HepG2 (cell line): ENCODE measurements at regions of chr3 and their contacts with region 1.

Region 1: DNA sequence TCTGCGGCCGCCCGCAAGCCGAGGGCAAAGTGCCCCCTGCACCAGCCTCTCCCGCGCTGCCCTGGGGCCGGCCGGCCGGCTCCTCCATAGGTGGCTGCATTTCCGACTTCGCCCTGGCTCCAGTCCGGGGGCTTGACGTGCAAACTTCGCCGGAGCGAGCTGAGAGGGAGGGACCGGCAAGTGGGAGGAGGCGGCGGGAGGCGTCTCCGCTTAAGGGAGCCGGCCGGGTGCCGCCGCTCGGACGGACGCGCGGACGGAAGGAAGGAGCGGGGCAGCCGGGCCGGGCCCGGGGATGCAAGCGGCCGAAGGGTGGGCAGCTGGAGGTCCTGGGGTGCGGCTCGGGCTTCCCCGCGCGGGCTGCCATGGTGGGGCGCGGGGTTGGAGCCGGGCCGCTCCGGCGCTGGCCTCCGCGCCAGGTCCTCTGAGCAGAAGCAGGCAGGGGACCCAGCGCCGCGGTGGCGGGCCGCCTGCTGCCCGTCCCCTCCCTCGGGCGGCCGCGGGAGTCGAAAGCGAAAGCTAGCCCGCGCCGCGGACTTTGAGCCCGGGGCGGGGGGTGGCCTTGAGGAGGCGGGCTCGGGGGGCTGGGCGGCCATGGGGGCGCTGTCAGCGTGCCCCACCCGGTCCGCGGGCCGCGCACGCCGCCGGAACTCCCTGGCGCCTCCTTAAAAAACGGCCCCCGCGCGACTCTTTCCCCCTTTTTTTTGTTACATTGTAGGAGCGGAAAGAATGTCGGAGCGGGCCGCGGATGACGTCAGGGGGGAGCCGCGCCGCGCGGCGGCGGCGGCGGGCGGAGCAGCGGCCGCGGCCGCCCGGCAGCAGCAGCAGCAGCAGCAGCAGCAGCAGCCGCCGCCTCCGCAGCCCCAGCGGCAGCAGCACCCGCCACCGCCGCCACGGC is at the start of gene SCAANT1:
- DNase-seq: peak; percentile 81
- ATAC-seq: peak; percentile 94
- H3K4me3 ChIP-seq: peak within 1 kb of the TSS; percentile 61 to 79 (median 61)
- H3K27ac ChIP-seq: peak within 1 kb of the TSS; percentile 98
- H3K4me1 ChIP-seq: peaks cover 36% of the 10 kb centered on the region
- H3K27me3 ChIP-seq: no peaks in the 10 kb centered on the region
- CTCF ChIP-seq: no peak; the same call in 1 of the 2 replicates
- EP300 ChIP-seq: peak in 1 of 2 experiments; percentile 19; a peak in 1 of 4 replicates
- POLR2A ChIP-seq: peak; percentile 61 to 79
- RAD21 ChIP-seq: peak; percentile 72
- total RNA-seq, gene SCAANT1: not detected in 2 replicates

Region 2: DNA sequence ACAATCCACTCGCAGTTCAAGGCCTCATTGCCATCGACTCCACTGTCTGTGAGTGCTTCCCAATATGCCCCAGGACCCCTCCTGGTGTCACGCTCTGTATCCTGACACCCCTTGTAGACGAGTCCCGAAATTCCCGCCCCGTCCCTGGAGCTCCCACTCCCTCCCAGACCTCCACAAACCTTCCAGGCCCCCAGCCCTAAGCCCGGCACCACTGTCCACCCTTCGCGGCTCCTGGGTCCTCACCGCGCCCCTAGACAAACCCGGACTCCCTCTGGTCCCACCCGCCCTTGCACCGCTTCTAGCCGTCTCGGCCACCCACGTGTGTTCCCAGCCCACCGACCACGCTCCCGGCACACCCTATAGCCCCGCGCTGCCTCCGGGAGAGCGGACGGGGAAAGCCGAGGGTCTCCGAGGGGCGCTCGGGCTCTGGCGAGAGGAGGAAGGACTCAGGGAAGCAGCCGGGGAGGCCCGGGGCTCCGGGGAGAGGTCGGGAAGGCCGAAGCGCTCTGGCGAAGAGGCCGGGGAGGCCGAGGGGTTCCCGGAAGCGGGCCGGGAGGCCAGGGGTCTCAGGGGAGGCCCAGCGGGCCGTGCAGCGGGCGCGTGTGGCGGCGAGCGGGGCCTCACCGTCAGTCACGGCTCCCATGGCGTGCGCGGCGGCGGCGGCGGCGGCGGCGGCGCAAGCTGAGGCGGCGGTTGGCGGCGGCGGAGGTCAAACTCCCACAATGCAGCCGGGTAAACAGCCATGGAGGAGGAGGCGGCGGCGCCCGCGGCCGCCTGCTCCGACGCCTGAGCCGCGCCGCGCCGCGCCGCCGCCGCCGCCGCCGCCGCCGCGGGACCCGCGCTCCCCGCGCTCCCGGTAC is 48.7 kb before region 1 on chr3 and contains the starts of genes ATXN7 and THOC7:
- CTCF ChIA-PET with region 1: no interaction called
- POLR2A ChIA-PET with region 1: interaction called, 11 read pairs
- in situ Hi-C with region 1: loop called (anchors 10 kb)
- intact Hi-C with region 1: loop called (anchors 2 kb)
- DNase-seq: peak; percentile 24
- ATAC-seq: peak; percentile 87
- H3K4me3 ChIP-seq: peak within 1 kb of the TSS; percentile 89 to 93 (median 93)
- H3K27ac ChIP-seq: peak within 1 kb of the TSS; percentile 94
- H3K4me1 ChIP-seq: peaks cover 46% of the 10 kb centered on the region
- H3K27me3 ChIP-seq: no peaks in the 10 kb centered on the region; a peak in 1 of 5 replicates
- CTCF ChIP-seq: no peak
- EP300 ChIP-seq: no peak
- POLR2A ChIP-seq: peak in 1 of 2 experiments; percentile 40; a peak in 2 of 4 replicates
- RAD21 ChIP-seq: no peak; the same call in 1 of the 2 replicates
- total RNA-seq, gene ATXN7: 5.4 and 13.8 TPM in 2 replicates
- total RNA-seq, gene THOC7: 63.5 and 80.4 TPM in 2 replicates

Region 3: DNA sequence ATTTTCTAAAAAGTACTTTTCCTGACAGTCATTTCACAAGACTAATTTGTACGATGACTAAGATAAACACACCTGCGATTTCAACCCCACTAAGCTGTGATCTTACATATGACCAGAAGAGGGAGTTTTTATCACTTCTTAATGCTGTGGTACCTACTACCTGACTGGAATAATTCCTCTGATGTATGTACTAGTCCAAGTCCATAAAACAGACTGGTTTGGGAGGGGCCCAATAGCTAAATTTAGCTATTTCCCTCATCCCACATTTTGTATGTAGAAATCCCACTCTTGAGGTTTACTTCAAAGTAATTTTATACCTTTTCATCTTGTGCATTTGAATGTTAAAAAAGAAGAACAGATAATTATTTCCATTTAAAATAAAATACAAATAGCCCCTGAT is 49.8 kb after region 1 on chr3:
- CTCF ChIA-PET with region 1: no interaction called
- POLR2A ChIA-PET with region 1: interaction called, 3 read pairs
- in situ Hi-C with region 1: no loop called
- intact Hi-C with region 1: loop called (anchors 5 kb)
- DNase-seq: peak; percentile 52
- ATAC-seq: peak; percentile 88
- H3K4me3 ChIP-seq: no peak overlapping the region
- H3K27ac ChIP-seq: no peak overlapping the region
- H3K4me1 ChIP-seq: peaks cover 11% of the 10 kb centered on the region
- H3K27me3 ChIP-seq: no peaks in the 10 kb centered on the region
- CTCF ChIP-seq: peak; percentile 69
- EP300 ChIP-seq: no peak
- POLR2A ChIP-seq: no peak
- RAD21 ChIP-seq: peak; percentile 38; the same call in 1 of the 2 replicates

Region 4: GRCh38 chr3:64554081-64554920 is 642.2 kb after region 1 on chr3:
- CTCF ChIA-PET with region 1: no interaction called
- POLR2A ChIA-PET with region 1: no interaction called
- in situ Hi-C with region 1: no loop called
- intact Hi-C with region 1: no loop called
- DNase-seq: no peak
- ATAC-seq: no peak
- H3K4me3 ChIP-seq: no peak overlapping the region
- H3K27ac ChIP-seq: no peak overlapping the region
- H3K4me1 ChIP-seq: peaks cover 10% of the 10 kb centered on the region; the same call in 1 of the 2 replicates
- H3K27me3 ChIP-seq: no peaks in the 10 kb centered on the region; a peak in 1 of 5 replicates
- CTCF ChIP-seq: no peak
- EP300 ChIP-seq: no peak
- POLR2A ChIP-seq: no peak
- RAD21 ChIP-seq: no peak